GM12878 (cell line): ENCODE measurements at regions of chr2 and their contacts with region 1.

Region 1: GRCh38 chr2:121530212-121530705 is 421 bp upstream of the RNU4ATAC start:
- DNase-seq: peak; percentile 52
- ATAC-seq: peak; percentile 82
- H3K4me3 ChIP-seq: peak overlapping the region; percentile 79
- H3K27ac ChIP-seq: peak overlapping the region; percentile 98
- H3K4me1 ChIP-seq: peaks cover 18% of the 10 kb centered on the region
- H3K27me3 ChIP-seq: no peaks in the 10 kb centered on the region
- CTCF ChIP-seq: no peak
- EP300 ChIP-seq: no peak
- POLR2A ChIP-seq: no peak
- RAD21 ChIP-seq: no peak

Region 2: DNA sequence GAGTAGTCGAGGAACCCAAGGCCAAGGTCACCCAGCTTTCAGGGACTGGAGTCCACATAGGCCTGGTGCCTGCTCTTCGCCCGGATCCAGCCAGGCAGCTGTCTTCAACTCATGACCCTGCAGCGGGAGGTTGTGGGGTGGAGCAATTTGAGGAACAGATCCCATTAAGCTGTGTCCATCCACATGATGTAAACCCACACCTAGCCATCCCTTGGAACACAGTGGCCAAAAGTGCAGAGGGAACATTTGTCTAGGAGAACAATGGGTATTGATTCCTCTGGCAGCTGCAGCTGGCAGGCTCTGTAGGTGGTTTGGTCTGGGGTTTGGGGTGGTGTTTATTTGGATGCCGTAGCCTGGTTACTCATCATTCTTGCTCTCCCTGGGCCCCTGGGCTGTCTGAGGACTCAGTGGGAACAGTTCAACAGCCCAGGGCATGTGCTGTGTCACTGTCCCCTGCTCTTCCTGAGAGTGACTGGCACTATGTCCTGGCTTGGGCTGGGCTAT is 344.6 kb before region 1 on chr2:
- CTCF ChIA-PET with region 1: no interaction called
- POLR2A ChIA-PET with region 1: no interaction called
- RAD21 ChIA-PET with region 1: no interaction called
- SMC1A ChIA-PET with region 1: no interaction called
- in situ Hi-C with region 1: no loop called
- intact Hi-C with region 1: no loop called
- DNase-seq: no peak
- ATAC-seq: no peak
- H3K4me3 ChIP-seq: no peak overlapping the region
- H3K27ac ChIP-seq: no peak overlapping the region
- H3K4me1 ChIP-seq: no peaks in the 10 kb centered on the region
- H3K27me3 ChIP-seq: no peaks in the 10 kb centered on the region
- CTCF ChIP-seq: no peak
- EP300 ChIP-seq: no peak
- POLR2A ChIP-seq: no peak
- RAD21 ChIP-seq: no peak

Region 3: GRCh38 chr2:121284463-121285449 is 245.5 kb before region 1 on chr2 and contains the start of gene TFCP2L1:
- CTCF ChIA-PET with region 1: no interaction called
- POLR2A ChIA-PET with region 1: no interaction called
- RAD21 ChIA-PET with region 1: no interaction called
- SMC1A ChIA-PET with region 1: no interaction called
- in situ Hi-C with region 1: no loop called
- intact Hi-C with region 1: no loop called
- DNase-seq: no peak
- ATAC-seq: peak; percentile 53
- H3K4me3 ChIP-seq: peak within 1 kb of the TSS; percentile 50; the same call in 1 of the 2 replicates
- H3K27ac ChIP-seq: no peak within 1 kb of the TSS
- H3K4me1 ChIP-seq: no peaks in the 10 kb centered on the region
- H3K27me3 ChIP-seq: peaks cover 4 to 5% of the 10 kb centered on the region in 2 experiments; a peak in 3 of 4 replicates
- CTCF ChIP-seq: no peak
- EP300 ChIP-seq: no peak
- POLR2A ChIP-seq: no peak
- RAD21 ChIP-seq: no peak
- polyA plus RNA-seq, gene TFCP2L1: 0.02 to 0.05 TPM

Region 4: GRCh38 chr2:121561617-121562268 is 31.5 kb after region 1 on chr2:
- CTCF ChIA-PET with region 1: interaction called, 5 read pairs
- POLR2A ChIA-PET with region 1: interaction called, 6 read pairs
- RAD21 ChIA-PET with region 1: interaction called, 4 read pairs
- SMC1A ChIA-PET with region 1: interaction called, 15 read pairs
- in situ Hi-C with region 1: no loop called
- intact Hi-C with region 1: no loop called
- DNase-seq: no peak
- ATAC-seq: peak; percentile 15; the same call in 2 of the 3 replicates
- H3K4me3 ChIP-seq: no peak overlapping the region
- H3K27ac ChIP-seq: peak overlapping the region; percentile 45
- H3K4me1 ChIP-seq: peaks cover 17% of the 10 kb centered on the region
- H3K27me3 ChIP-seq: no peaks in the 10 kb centered on the region
- CTCF ChIP-seq: no peak
- EP300 ChIP-seq: no peak
- POLR2A ChIP-seq: no peak
- RAD21 ChIP-seq: no peak

Region 5: DNA sequence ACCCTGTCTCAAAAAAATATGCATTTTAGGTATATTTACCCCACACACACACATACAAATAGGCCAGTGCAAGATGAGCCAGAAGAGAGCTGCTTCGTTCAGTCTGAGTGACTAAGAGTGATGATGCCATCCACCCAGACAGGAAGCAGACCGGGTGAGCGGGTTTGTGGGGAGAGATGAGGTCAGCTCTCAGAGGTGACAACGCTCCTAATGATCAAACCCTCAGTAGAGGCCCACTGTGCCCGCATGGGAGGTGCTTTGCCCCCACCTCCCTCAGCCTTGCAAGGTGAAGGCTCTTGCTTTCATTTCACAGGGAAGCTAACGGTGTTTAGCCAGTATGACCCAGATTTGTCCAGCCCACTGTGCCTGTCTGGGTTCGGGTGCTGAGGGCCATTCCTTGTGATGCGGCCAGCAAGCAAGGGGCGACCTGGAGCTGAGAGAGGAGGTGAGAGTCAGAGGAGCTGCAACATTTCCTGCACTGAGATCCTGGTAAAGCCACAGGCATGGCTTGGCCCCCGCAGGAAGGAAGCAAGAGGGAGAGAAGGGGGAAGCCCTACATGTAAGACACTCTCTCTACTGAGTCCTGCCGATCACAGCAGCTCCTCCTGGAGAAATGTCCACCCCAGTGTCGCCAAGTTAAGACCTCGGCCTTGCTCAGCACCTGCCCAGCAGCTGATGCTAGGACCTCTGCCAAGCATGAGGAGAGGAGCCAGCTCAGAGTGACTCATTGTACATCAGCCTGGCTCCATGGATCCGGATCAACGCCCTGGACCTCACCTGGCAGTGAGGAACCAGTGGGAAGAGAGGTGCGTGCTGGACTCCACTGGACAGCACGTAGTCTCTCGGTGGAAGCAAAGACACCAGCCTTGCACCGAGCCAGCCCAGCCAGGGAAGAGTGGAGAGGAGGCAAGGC is 169.4 kb after region 1 on chr2:
- CTCF ChIA-PET with region 1: interaction called, 15 read pairs
- POLR2A ChIA-PET with region 1: interaction called, 3 read pairs
- RAD21 ChIA-PET with region 1: interaction called, 3 read pairs
- SMC1A ChIA-PET with region 1: interaction called, 6 read pairs
- in situ Hi-C with region 1: no loop called
- intact Hi-C with region 1: no loop called
- DNase-seq: peak; percentile 60
- ATAC-seq: peak; percentile 99
- H3K4me3 ChIP-seq: no peak overlapping the region; the same call in 1 of the 2 replicates
- H3K27ac ChIP-seq: peak overlapping the region; percentile 22
- H3K4me1 ChIP-seq: peaks cover 15% of the 10 kb centered on the region
- H3K27me3 ChIP-seq: no peaks in the 10 kb centered on the region
- CTCF ChIP-seq: no peak
- EP300 ChIP-seq: no peak; a peak in 1 of 4 replicates
- POLR2A ChIP-seq: peak; percentile 47; the same call in 1 of the 2 replicates
- RAD21 ChIP-seq: no peak

Region 6: DNA sequence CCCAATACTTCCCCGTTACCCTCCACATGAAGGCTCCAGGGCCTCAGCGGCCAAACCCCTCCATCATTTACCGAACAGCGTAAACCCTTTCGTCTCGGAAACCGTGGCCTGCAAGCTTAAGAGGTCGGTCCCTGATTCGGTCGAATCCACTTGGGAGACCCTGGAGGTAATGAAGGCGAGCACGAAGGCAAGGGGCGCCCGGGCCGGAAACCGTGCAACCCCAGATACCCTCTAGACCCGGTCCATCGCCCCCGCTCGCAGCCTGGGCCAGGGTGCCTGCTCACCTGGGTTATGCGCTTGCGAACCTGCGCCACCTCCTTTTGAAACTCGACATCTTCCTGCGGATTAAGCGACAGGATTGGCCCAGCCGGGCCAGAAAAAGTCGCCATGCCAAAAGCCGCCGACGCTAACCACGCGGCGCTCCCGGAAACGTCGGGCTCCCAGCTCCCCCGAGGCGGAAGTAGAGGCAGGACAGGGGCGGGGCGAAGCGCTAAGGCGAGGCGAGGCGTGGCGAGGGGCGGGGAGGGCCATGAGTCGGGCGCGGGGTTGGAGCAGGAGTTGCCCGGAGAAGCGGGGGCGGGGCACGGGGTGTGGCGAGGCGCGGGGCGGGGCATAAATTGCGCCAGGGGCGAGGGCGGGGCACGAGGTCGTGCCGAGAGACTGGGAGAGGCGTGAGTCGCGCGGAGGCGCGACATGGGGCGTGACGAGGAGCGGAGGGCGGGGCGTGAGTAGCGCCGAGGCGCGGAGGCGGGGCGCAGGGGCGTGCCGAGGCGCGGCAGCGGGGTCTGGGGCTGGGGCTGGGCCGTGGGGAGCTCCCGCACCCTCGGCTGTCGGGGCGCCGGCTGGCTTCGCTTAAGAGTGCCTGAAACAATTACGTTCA is 206.4 kb after region 1 on chr2 and contains the start of gene NIFK:
- CTCF ChIA-PET with region 1: interaction called, 5 read pairs
- POLR2A ChIA-PET with region 1: interaction called, 19 read pairs
- RAD21 ChIA-PET with region 1: no interaction called
- SMC1A ChIA-PET with region 1: interaction called, 4 read pairs
- in situ Hi-C with region 1: no loop called
- intact Hi-C with region 1: loop called (anchors 5 kb)
- DNase-seq: peak; percentile 89
- ATAC-seq: peak; percentile 97
- H3K4me3 ChIP-seq: peak within 1 kb of the TSS; percentile 86
- H3K27ac ChIP-seq: peak within 1 kb of the TSS; percentile 90
- H3K4me1 ChIP-seq: no peaks in the 10 kb centered on the region; the same call in 1 of the 2 replicates
- H3K27me3 ChIP-seq: no peaks in the 10 kb centered on the region
- CTCF ChIP-seq: no peak
- EP300 ChIP-seq: no peak
- POLR2A ChIP-seq: peak; percentile 91
- RAD21 ChIP-seq: no peak
- polyA plus RNA-seq, gene NIFK: 156 to 171 TPM